CD8-positive, alpha-beta T cell (primary cell): ENCODE measurements at regions of chr10 and their contacts with region 1.

Region 1: GRCh38 chr10:98134431-98135221 is at the start of gene R3HCC1L:
- DNase-seq: peak; percentile 87 to 96 (median 93)
- ATAC-seq: peak; percentile 95
- H3K4me3 ChIP-seq: peak within 1 kb of the TSS; percentile 85
- H3K4me3 Mint-ChIP-seq: peak within 1 kb of the TSS; percentile 92
- H3K27ac ChIP-seq: peak within 1 kb of the TSS; percentile 91 to 93
- H3K27ac Mint-ChIP-seq: peak within 1 kb of the TSS; percentile 97
- H3K4me1 ChIP-seq: peaks cover 23% of the 10 kb centered on the region
- H3K4me1 Mint-ChIP-seq: peaks cover 48% of the 10 kb centered on the region
- H3K27me3 ChIP-seq: no peaks in the 10 kb centered on the region
- H3K27me3 Mint-ChIP-seq: no peaks in the 10 kb centered on the region
- CTCF ChIP-seq: no peak
- total RNA-seq, gene R3HCC1L: 13.6 to 13.7 TPM

Region 2: DNA sequence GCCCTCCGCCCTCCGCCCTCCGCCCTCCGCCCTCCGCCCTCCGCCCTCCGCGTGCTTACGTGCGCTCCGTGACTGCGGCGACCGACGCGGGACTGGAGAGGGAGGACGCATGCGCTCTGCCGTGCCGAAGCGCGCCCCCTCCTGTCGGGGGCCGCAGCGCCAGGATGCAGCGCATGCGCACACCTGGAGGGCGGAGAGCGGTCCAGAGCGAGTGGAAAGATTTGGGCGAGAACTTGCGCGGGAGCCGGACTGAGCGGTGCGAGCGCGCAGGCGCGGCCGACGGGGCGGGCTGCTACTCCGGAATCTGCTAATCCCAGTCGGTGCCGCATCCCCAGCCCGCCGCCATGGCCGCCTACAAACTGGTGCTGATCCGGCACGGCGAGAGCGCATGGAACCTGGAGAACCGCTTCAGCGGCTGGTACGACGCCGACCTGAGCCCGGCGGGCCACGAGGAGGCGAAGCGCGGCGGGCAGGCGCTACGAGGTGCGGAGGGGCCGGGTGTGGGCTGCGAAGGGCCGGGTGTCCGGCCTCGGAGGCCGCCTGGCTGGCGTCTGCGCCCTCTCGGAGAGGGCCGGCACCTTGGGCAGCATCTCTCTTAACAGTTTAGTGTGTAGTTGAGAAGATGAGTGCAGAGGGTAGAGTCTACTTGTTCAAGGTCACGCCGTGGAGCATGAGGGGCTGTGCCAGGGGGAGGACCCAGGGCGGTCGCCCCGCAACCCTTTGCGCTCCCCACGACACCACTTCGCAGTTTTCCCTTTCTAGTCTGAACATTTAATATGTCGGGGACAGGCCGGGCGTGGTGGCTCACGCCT is 708.5 kb before region 1 on chr10 and contains the start of gene PGAM1:
- CTCF ChIA-PET with region 1: no interaction called
- POLR2A ChIA-PET with region 1: no interaction called
- intact Hi-C with region 1: loop called in 1 of 2 experiments (anchors 10 kb)
- DNase-seq: peak; percentile 91 to 99 (median 93)
- ATAC-seq: peak; percentile 81
- H3K4me3 ChIP-seq: peak within 1 kb of the TSS; percentile 84
- H3K4me3 Mint-ChIP-seq: peak within 1 kb of the TSS; percentile 90
- H3K27ac ChIP-seq: peak within 1 kb of the TSS; percentile 85 to 86
- H3K27ac Mint-ChIP-seq: peak within 1 kb of the TSS; percentile 92
- H3K4me1 ChIP-seq: peaks cover 24% of the 10 kb centered on the region
- H3K4me1 Mint-ChIP-seq: peaks cover 44% of the 10 kb centered on the region
- H3K27me3 ChIP-seq: no peaks in the 10 kb centered on the region
- H3K27me3 Mint-ChIP-seq: no peaks in the 10 kb centered on the region
- CTCF ChIP-seq: peak; percentile 47
- total RNA-seq, gene PGAM1: 56.7 to 56.8 TPM

Region 3: GRCh38 chr10:97640174-97640867 is 494.3 kb before region 1 on chr10 and contains the start of gene PI4K2A:
- CTCF ChIA-PET with region 1: no interaction called
- POLR2A ChIA-PET with region 1: no interaction called
- intact Hi-C with region 1: loop called in 1 of 2 experiments (anchors 2 kb)
- DNase-seq: peak; percentile 97 to 100 (median 98)
- ATAC-seq: peak; percentile 97
- H3K4me3 ChIP-seq: peak within 1 kb of the TSS; percentile 58 to 84
- H3K4me3 Mint-ChIP-seq: peak within 1 kb of the TSS; percentile 95
- H3K27ac ChIP-seq: peak within 1 kb of the TSS; percentile 54 to 55
- H3K27ac Mint-ChIP-seq: peak within 1 kb of the TSS; percentile 90
- H3K4me1 ChIP-seq: peaks cover 10% of the 10 kb centered on the region
- H3K4me1 Mint-ChIP-seq: peaks cover 24% of the 10 kb centered on the region
- H3K27me3 ChIP-seq: no peaks in the 10 kb centered on the region
- H3K27me3 Mint-ChIP-seq: no peaks in the 10 kb centered on the region
- CTCF ChIP-seq: no peak
- total RNA-seq, gene PI4K2A: 37.6 to 37.7 TPM

Region 4: DNA sequence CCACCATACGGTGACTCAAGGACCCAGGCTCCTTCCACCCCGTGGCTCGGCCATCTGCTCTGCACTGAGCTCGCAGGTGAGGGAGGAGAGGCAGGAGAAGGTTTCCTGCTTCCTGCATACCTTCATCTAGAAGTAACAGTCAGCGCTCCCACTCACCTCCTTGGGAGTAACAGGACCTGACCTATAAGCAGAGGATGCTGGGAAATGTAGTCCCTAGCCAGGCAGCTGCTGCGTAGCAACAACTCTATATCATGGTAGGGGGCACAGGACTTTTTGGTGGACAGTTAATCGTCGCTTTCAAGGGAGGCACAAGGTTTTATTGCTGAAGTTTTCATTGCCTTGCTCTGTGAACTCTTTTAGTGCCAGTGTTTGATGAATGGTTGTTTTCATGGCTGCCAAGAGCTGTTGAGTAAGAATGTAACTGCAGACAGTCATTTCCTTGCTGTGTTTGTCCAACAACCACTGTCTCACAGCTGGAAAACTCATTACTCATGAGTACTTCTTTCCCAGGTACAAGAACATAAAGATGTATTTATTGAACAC is 407.9 kb before region 1 on chr10:
- CTCF ChIA-PET with region 1: no interaction called
- POLR2A ChIA-PET with region 1: no interaction called
- intact Hi-C with region 1: no loop called
- DNase-seq: no peak
- ATAC-seq: no peak
- H3K4me3 ChIP-seq: no peak overlapping the region
- H3K4me3 Mint-ChIP-seq: no peak overlapping the region
- H3K27ac ChIP-seq: no peak overlapping the region
- H3K27ac Mint-ChIP-seq: no peak overlapping the region
- H3K4me1 ChIP-seq: no peaks in the 10 kb centered on the region
- H3K4me1 Mint-ChIP-seq: no peaks in the 10 kb centered on the region
- H3K27me3 ChIP-seq: peaks cover 0 to 2% of the 10 kb centered on the region in 2 experiments
- H3K27me3 Mint-ChIP-seq: peaks cover 19% of the 10 kb centered on the region
- CTCF ChIP-seq: no peak

Region 5: DNA sequence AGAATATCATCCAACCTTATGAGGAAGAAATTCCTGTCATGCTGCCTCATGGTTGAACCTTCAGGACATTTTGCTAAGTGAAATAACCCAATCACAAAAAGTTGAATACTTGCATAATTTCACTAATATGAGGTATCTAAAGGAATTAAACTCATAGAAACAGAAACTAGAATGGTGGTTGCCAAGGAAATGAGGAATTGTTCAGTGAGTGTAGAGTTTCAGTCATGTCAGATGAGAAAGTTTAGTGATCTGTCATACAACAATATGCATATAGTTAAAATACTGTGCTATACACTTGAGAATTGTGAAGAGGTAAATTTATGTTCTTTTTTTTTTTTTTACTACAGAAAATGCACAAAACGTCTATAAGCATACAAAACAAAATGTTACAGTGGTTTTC is 60.5 kb after region 1 on chr10:
- CTCF ChIA-PET with region 1: no interaction called
- POLR2A ChIA-PET with region 1: no interaction called
- intact Hi-C with region 1: no loop called
- DNase-seq: no peak
- ATAC-seq: no peak
- H3K4me3 ChIP-seq: no peak overlapping the region
- H3K4me3 Mint-ChIP-seq: no peak overlapping the region
- H3K27ac ChIP-seq: no peak overlapping the region
- H3K27ac Mint-ChIP-seq: no peak overlapping the region
- H3K4me1 ChIP-seq: no peaks in the 10 kb centered on the region
- H3K4me1 Mint-ChIP-seq: peaks cover 20% of the 10 kb centered on the region
- H3K27me3 ChIP-seq: no peaks in the 10 kb centered on the region
- H3K27me3 Mint-ChIP-seq: no peaks in the 10 kb centered on the region
- CTCF ChIP-seq: no peak

Region 6: DNA sequence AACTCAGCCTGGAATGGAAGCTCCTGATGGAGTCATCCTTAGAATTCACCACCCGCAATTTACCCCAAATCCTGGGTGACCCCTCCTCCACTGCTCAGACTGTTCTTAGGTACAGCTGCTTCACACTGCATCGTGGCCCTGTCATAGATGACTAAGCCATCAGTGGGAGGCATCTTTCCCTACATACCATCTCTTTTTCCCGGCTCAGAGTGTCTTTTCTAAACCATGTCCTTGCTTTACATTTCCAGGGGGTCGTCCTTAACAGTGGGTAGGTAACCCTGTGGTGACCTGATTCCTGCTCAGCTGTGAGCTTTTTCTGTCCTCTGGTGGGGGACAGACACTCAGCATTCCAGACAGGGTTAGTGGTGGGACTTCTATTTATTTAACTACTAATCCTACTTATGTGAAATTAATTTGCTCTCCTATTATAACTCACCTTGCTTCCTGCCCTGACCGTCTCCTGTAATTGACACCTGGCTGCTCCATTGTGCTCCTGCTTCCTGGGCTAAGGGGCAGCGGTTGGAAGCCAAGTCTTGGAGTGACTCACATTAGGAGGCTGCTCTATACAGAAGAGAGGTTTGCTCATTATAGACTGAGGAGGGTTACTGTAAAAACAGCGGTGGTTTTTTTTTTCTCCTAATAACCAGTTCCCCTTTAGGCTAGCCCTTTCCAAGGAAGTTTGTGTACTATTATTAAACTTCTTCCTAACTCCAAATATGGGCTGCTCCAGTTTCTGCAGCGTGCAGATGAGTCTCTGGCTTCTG is 239.8 kb after region 1 on chr10:
- CTCF ChIA-PET with region 1: no interaction called
- POLR2A ChIA-PET with region 1: no interaction called
- intact Hi-C with region 1: no loop called
- DNase-seq: no peak
- ATAC-seq: no peak
- H3K4me3 ChIP-seq: no peak overlapping the region
- H3K4me3 Mint-ChIP-seq: no peak overlapping the region
- H3K27ac ChIP-seq: no peak overlapping the region
- H3K27ac Mint-ChIP-seq: no peak overlapping the region
- H3K4me1 ChIP-seq: no peaks in the 10 kb centered on the region
- H3K4me1 Mint-ChIP-seq: no peaks in the 10 kb centered on the region
- H3K27me3 ChIP-seq: no peaks in the 10 kb centered on the region
- H3K27me3 Mint-ChIP-seq: peaks cover 5% of the 10 kb centered on the region
- CTCF ChIP-seq: no peak

Region 7: DNA sequence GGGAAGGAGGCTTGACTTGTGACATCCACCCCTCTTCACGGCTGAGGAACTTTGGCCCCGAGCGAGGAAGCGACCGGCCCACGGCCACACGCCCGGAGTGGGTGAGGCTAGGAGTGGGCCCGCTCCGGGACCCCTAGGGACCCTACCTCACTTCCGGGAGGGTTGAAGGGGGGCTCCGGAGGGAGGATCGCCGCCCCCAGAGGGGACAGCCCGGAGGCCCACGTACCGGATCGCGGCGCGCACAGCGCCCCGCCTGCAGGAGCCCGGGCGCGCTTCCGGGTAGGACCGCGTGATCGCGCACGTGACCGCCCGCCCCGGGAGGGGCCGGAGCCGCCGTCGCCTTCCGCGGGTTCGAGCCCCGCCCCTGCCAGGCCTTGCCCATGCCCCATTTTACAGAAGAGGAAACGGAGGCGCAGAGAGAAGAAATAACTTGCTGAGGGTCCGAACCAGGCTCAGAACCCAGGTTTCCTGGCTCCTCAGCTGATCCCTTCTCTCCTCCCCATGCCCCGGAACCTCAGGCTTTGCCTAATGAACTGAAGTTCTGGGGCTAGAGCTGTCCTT is 312.1 kb after region 1 on chr10 and contains the start of gene HPS1:
- CTCF ChIA-PET with region 1: no interaction called
- POLR2A ChIA-PET with region 1: no interaction called
- intact Hi-C with region 1: loop called (anchors 1 to 5 kb)
- DNase-seq: peak; percentile 60 to 89 (median 79)
- ATAC-seq: peak; percentile 85
- H3K4me3 ChIP-seq: peak within 1 kb of the TSS; percentile 74 to 91
- H3K4me3 Mint-ChIP-seq: peak within 1 kb of the TSS; percentile 90
- H3K27ac ChIP-seq: peak within 1 kb of the TSS; percentile 81 to 90
- H3K27ac Mint-ChIP-seq: peak within 1 kb of the TSS; percentile 92
- H3K4me1 ChIP-seq: peaks cover 16% of the 10 kb centered on the region
- H3K4me1 Mint-ChIP-seq: peaks cover 45% of the 10 kb centered on the region
- H3K27me3 ChIP-seq: no peaks in the 10 kb centered on the region
- H3K27me3 Mint-ChIP-seq: peaks cover under 1% of the 10 kb centered on the region
- CTCF ChIP-seq: no peak
- total RNA-seq, gene HPS1: 54.1 to 54.3 TPM